Mammary epithelial cell (primary cell): ENCODE measurements at regions of chr4 and their contacts with region 1.

Region 1: GRCh38 chr4:53476232-53477037 is 99.0 kb downstream of the FIP1L1 start:
- DNase-seq: peak; percentile 98
- H3K4me3 ChIP-seq: no peak overlapping the region
- H3K27ac ChIP-seq: peak overlapping the region; percentile 87
- H3K4me1 ChIP-seq: peaks cover 56% of the 10 kb centered on the region
- H3K27me3 ChIP-seq: no peaks in the 10 kb centered on the region
- CTCF ChIP-seq: no peak

Region 2: GRCh38 chr4:53377319-53378170 is 98.9 kb before region 1 on chr4 and contains the start of gene FIP1L1:
- CTCF ChIA-PET with region 1: no interaction called
- dilution Hi-C with region 1: no loop called
- in situ Hi-C with region 1: no loop called
- intact Hi-C with region 1: loop called (anchors 2 kb)
- DNase-seq: peak; percentile 85
- H3K4me3 ChIP-seq: peak within 1 kb of the TSS; percentile 71 to 93 (median 88)
- H3K27ac ChIP-seq: peak within 1 kb of the TSS; percentile 70
- H3K4me1 ChIP-seq: no peaks in the 10 kb centered on the region
- H3K27me3 ChIP-seq: no peaks in the 10 kb centered on the region
- CTCF ChIP-seq: peak in 1 of 2 donors; percentile 3
- total RNA-seq, gene FIP1L1: 42.3 to 70.8 TPM

Region 3: GRCh38 chr4:53424280-53424679 is 52.2 kb before region 1 on chr4:
- CTCF ChIA-PET with region 1: no interaction called
- dilution Hi-C with region 1: no loop called
- in situ Hi-C with region 1: no loop called
- intact Hi-C with region 1: no loop called
- DNase-seq: no peak
- H3K4me3 ChIP-seq: no peak overlapping the region
- H3K27ac ChIP-seq: no peak overlapping the region
- H3K4me1 ChIP-seq: no peaks in the 10 kb centered on the region
- H3K27me3 ChIP-seq: no peaks in the 10 kb centered on the region
- CTCF ChIP-seq: no peak